ENCODE measurements at regions of chr5 and their contacts with region 1.

Region 1: GRCh38 chr5:10552183-10553143 is 11.4 kb upstream of the ANKRD33B start:
- DNase-seq: no peak
- H3K4me3 ChIP-seq: no peak overlapping the region
- H3K27ac ChIP-seq: peak overlapping the region; percentile 47
- H3K4me1 ChIP-seq: peaks cover 35% of the 10 kb centered on the region
- H3K27me3 ChIP-seq: no peaks in the 10 kb centered on the region
- CTCF ChIP-seq: no peak

Region 2: GRCh38 chr5:10064546-10065195 is 487.8 kb before region 1 on chr5:
- CTCF ChIA-PET with region 1: no interaction called
- dilution Hi-C with region 1: no loop called
- in situ Hi-C with region 1: no loop called
- intact Hi-C with region 1: no loop called
- DNase-seq: no peak
- H3K4me3 ChIP-seq: no peak overlapping the region
- H3K27ac ChIP-seq: no peak overlapping the region
- H3K4me1 ChIP-seq: no peaks in the 10 kb centered on the region
- H3K27me3 ChIP-seq: no peaks in the 10 kb centered on the region
- CTCF ChIP-seq: no peak

Region 3: GRCh38 chr5:10621832-10622231 is 69.4 kb after region 1 on chr5:
- CTCF ChIA-PET with region 1: no interaction called
- dilution Hi-C with region 1: loop called (anchors 5 kb)
- in situ Hi-C with region 1: no loop called
- intact Hi-C with region 1: loop called (anchors 5 kb)
- DNase-seq: no peak
- H3K4me3 ChIP-seq: no peak overlapping the region
- H3K27ac ChIP-seq: no peak overlapping the region
- H3K4me1 ChIP-seq: no peaks in the 10 kb centered on the region
- H3K27me3 ChIP-seq: no peaks in the 10 kb centered on the region
- CTCF ChIP-seq: no peak

Measured in mammary epithelial cell (primary cell).